PC-9 (cell line): ENCODE measurements at regions of chr11 and their contacts with region 1.

Region 1: DNA sequence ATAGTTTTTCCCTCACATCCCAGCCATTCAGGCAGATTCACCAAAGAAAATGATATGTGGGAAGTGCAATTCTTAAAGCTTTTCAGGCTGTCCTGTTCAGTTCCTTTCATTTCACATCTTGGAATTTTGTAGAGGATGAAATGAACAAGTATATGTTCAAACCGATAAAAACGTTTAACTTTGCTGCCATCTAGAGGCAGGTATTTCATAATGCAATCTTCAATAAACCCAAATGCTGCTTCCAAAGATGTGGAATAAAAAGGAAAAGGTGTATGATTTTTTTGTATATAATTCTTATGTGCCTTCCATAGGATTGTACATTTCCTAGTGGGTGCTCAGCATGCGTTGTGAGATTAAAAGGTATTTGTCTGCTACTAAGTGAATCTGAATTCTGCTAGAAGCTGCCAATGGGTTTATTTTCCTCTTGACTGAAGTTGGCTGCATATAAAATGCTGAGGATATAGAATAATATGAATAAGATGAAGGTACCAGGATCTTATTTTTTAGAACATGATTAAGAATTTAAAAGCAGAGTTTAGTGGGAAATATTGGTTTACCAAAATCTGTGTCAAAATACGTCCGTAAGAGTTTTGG is 199.3 kb downstream of the PGR start:
- DNase-seq: peak in 1 of 2 experiments; percentile 71
- H3K4me3 ChIP-seq: no peak overlapping the region
- H3K27ac ChIP-seq: no peak overlapping the region
- H3K4me1 ChIP-seq: peaks cover 35% of the 10 kb centered on the region
- H3K27me3 ChIP-seq: no peaks in the 10 kb centered on the region
- CTCF ChIP-seq: peak; percentile 90

Region 2: GRCh38 chr11:100861223-100861622 is 69.1 kb before region 1 on chr11:
- CTCF ChIA-PET with region 1: no interaction called
- POLR2A ChIA-PET with region 1: no interaction called
- intact Hi-C with region 1: loop called (anchors 1 kb)
- DNase-seq: peak; percentile 68 to 97
- H3K4me3 ChIP-seq: no peak overlapping the region
- H3K27ac ChIP-seq: peak overlapping the region; percentile 62
- H3K4me1 ChIP-seq: peaks cover 34% of the 10 kb centered on the region
- H3K27me3 ChIP-seq: no peaks in the 10 kb centered on the region
- CTCF ChIP-seq: no peak

Region 3: DNA sequence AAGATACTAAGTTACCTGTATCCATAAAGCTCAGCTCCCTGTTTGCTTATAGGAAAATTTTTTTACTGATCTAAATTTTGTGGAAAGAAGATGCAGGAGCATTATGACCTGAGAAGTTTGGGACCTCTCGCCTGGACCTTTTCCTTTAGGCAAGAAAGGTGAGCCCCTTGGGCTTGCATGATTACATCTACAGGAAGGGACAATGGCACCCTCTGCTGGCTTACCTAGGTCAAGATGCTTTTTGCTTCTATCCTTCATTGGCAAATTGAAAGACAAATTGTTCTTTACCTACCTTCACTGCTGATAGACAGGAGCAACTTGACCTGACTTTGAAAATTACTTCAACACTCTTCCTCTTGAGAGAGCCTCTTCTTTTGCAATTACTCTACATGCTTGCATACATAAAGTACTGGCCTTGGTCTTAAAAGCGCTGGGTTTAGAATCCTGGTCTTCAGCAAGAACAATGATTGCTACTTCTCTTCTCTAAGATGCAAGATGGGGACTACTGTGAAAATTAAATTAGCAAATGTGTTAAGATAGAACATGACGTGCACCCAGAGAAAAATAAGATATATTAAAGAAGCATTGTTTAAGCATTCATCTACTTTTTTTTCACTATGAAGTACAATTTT is 506.3 kb after region 1 on chr11:
- CTCF ChIA-PET with region 1: interaction called, 4 read pairs
- POLR2A ChIA-PET with region 1: no interaction called
- intact Hi-C with region 1: loop called (anchors 5 kb)
- DNase-seq: peak in 1 of 2 experiments; percentile 39
- H3K4me3 ChIP-seq: no peak overlapping the region
- H3K27ac ChIP-seq: no peak overlapping the region
- H3K4me1 ChIP-seq: no peaks in the 10 kb centered on the region
- H3K27me3 ChIP-seq: no peaks in the 10 kb centered on the region
- CTCF ChIP-seq: peak; percentile 79